ENCODE measurements at regions of chr17 and their contacts with region 1.

Region 1: DNA sequence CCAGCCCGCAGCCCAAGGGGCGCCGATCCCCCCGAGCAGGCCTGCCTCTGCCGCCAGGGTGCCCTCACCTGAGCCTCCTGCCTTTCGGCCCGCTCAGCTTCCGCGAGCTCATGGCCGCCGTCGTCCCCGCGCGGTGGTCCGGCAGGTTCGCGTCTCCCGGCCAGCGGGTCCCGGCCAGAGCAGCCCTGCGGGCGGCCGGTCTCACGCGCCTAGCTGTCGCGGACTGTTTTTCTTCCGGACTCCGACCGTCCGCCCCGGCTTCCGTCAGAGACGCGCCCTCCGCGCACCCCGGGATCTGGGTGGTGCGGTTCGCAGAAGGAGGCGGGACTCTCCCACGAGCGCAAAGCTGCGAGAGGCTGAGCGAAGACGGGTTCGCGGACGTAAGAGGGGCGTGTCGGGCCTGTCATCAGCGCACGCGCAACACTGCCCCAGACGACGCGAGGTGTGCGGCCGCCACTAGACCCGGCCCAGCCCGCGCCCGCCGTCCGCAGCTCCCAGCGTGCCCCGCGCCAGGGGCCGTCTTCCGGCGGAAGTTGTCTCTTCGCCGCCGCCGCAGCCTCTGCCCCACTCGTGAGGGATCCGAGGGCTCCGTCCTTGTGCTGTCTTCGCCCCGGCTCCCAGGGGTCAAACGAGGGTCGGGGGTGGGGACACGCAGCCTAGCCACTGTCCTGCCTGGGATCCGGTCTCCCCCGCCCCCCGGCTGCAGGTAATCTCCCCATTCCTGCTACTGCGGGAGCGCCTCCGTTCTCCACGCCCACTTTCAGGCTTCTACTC is at the start of gene INPP5K:
- DNase-seq: peak; percentile 99
- H3K4me3 ChIP-seq: peak within 1 kb of the TSS; percentile 91
- H3K27ac ChIP-seq: peak within 1 kb of the TSS; percentile 91
- H3K4me1 ChIP-seq: peaks cover 25% of the 10 kb centered on the region
- H3K27me3 ChIP-seq: no peaks in the 10 kb centered on the region
- CTCF ChIP-seq: no peak
- total RNA-seq, gene INPP5K: 26.2 and 27.5 TPM in 2 replicates

Region 2: DNA sequence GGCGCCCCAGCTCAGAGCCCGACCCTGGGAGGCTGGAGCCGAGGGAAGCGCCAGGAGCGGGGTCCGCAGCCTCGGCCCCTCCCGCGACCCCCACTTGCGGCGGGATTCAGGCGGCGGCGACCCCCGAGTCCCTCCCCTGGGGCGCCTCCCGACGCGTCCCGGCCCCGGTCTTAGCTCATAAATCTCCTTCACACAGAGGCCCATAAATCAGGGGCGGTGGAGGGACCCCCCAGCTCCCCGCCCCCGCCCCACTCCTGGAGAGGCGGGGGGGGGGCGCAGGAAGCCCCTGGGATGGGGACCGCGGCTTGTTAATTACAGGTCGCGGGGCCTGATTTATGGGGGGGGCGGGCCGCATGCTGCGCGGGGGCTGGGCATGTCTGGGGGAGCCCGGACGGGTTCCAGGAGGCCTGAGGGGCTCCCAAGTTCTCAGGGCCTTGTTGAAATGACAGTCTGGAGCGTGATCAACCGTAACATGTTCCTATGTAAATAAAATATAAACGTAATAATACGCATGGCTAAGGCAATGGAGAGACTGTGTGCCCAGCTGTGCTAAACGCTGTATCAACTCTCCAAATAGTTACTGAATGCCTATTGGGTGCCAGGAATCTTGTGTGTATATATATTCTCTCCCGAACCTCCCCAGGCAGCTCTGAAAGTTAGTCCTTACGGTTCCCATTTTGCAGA is 256.3 kb before region 1 on chr17:
- CTCF ChIA-PET with region 1: interaction called, 6 read pairs
- POLR2A ChIA-PET with region 1: no interaction called
- intact Hi-C with region 1: loop called (anchors 5 kb)
- DNase-seq: no peak
- H3K4me3 ChIP-seq: peak overlapping the region; percentile 62
- H3K27ac ChIP-seq: no peak overlapping the region
- H3K4me1 ChIP-seq: peaks cover 3% of the 10 kb centered on the region
- H3K27me3 ChIP-seq: no peaks in the 10 kb centered on the region
- CTCF ChIP-seq: no peak

Region 3: DNA sequence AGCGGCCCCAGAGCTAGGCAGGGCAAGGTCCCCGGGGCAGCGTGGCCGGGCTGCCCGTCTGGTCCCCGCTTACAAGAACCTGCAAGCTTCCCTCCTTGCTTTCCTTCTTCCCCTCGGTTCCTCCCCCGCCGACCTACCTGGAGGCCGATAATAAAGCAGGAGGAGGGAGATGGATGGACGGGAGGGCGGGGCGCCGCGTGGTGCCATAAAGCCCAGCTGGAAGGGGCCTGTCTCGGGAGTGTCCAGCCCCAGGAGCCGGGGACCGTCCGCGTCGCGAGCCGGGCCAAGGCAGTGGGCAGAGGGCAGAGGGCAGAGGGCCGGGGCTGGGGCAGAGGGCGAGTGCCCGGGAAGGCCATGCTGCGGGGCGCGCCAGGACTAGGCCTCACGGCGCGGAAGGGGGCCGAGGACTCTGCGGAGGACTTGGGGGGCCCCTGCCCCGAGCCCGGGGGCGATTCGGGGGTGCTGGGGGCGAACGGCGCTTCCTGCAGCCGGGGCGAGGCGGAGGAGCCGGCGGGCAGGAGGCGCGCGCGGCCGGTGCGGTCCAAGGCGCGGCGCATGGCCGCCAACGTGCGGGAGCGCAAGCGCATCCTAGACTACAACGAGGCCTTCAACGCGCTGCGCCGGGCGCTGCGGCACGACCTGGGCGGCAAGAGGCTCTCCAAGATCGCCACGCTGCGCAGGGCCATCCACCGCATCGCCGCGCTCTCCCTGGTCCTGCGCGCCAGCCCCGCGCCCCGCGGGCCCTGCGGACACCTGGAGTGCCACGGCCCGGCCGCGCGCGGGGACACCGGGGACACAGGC is 246.2 kb before region 1 on chr17 and contains the start of gene BHLHA9:
- CTCF ChIA-PET with region 1: no interaction called
- POLR2A ChIA-PET with region 1: no interaction called
- intact Hi-C with region 1: loop called (anchors 5 kb)
- DNase-seq: no peak
- H3K4me3 ChIP-seq: no peak within 1 kb of the TSS
- H3K27ac ChIP-seq: no peak within 1 kb of the TSS
- H3K4me1 ChIP-seq: peaks cover 10% of the 10 kb centered on the region
- H3K27me3 ChIP-seq: peaks cover 9% of the 10 kb centered on the region
- CTCF ChIP-seq: no peak
- total RNA-seq, gene BHLHA9: not detected in 2 replicates

Region 4: DNA sequence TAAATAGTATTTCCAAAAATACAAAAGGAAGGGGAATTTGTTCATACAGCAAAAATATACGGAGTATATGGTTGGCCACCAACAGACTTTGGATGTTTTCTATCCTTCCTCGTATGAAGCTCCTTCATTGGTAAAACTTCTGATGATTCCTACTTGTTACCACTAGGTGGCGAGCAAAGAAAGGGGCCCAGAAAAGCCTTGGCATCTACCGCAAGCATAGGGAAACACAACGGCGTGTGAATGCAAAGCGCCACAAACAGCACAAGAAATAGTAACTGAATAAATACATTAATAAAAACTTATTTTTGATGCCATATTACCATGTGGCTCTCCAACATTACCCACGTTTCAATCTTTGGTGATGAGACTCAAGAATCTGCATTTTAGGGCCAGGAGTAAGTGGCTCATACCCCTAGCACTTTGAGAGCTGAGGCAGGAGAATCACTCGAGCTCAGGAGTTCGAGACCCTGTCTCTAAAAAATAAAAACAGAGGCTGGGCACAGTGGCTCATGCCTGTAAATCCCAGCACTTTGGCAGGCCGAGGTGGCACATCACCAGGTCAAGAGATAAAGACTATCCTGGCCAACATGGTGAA is 151.0 kb before region 1 on chr17:
- CTCF ChIA-PET with region 1: interaction called, 25 read pairs
- POLR2A ChIA-PET with region 1: no interaction called
- intact Hi-C with region 1: loop called (anchors 5 kb)
- DNase-seq: peak; percentile 91
- H3K4me3 ChIP-seq: no peak overlapping the region
- H3K27ac ChIP-seq: no peak overlapping the region
- H3K4me1 ChIP-seq: peaks cover 26% of the 10 kb centered on the region
- H3K27me3 ChIP-seq: no peaks in the 10 kb centered on the region
- CTCF ChIP-seq: peak; percentile 91

Region 5: GRCh38 chr17:1495265-1495989 is 21.1 kb before region 1 on chr17:
- CTCF ChIA-PET with region 1: no interaction called
- POLR2A ChIA-PET with region 1: no interaction called
- intact Hi-C with region 1: no loop called
- DNase-seq: no peak
- H3K4me3 ChIP-seq: no peak overlapping the region
- H3K27ac ChIP-seq: no peak overlapping the region
- H3K4me1 ChIP-seq: peaks cover 4% of the 10 kb centered on the region
- H3K27me3 ChIP-seq: no peaks in the 10 kb centered on the region
- CTCF ChIP-seq: no peak

Region 6: DNA sequence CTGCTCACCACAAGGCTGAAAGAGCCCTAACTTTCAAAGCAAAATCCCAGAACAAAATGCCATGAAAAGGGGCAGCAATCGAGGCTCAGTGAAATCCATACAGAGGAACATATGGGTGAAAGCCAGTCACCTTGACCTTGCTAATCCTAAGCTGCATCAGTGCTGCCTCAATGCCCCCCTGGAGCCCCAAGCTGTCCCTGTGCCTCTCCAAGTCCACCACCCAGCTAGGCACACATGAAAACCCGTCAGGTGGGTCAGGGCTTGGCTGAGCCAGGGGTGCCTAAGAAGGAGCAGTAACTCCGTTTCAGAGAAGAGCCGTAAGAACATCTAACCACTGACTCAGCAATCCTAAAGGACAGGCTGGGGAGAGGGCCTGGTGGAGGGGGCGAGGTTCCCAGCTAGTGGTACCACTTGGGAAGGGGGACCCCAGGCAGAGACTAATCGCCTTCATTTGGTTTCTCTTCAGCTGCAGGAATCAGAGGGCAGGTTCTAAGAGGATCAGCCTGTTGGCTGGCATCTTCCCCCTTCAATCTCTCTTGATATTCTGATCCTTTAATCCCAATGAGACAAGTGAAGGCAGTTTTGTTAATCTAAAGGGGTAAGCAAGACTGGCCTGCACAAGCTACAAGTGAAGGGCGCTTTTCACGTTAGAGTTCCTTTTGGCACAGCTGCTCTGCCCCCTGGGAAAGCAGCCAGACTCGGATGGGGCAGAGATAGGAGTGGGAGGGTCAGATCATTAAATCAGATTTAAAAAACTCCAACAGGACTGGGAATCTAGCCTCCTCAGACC is 38.4 kb after region 1 on chr17:
- CTCF ChIA-PET with region 1: no interaction called
- POLR2A ChIA-PET with region 1: interaction called, 13 read pairs
- intact Hi-C with region 1: no loop called
- DNase-seq: no peak
- H3K4me3 ChIP-seq: no peak overlapping the region
- H3K27ac ChIP-seq: no peak overlapping the region
- H3K4me1 ChIP-seq: peaks cover 8% of the 10 kb centered on the region
- H3K27me3 ChIP-seq: no peaks in the 10 kb centered on the region
- CTCF ChIP-seq: no peak

Region 7: GRCh38 chr17:1829592-1830257 is 313.1 kb after region 1 on chr17 and contains the starts of genes RPA1 and SMYD4:
- CTCF ChIA-PET with region 1: no interaction called
- POLR2A ChIA-PET with region 1: interaction called, 19 read pairs
- intact Hi-C with region 1: no loop called
- DNase-seq: peak; percentile 94
- H3K4me3 ChIP-seq: peak within 1 kb of the TSS; percentile 93
- H3K27ac ChIP-seq: peak within 1 kb of the TSS; percentile 78
- H3K4me1 ChIP-seq: peaks cover 4% of the 10 kb centered on the region
- H3K27me3 ChIP-seq: no peaks in the 10 kb centered on the region
- CTCF ChIP-seq: no peak
- total RNA-seq, gene RPA1: 211 and 231 TPM in 2 replicates
- total RNA-seq, gene SMYD4: 28.1 and 31.6 TPM in 2 replicates

Measured in A673 (cell line).